HEK293 (cell line): ENCODE measurements at regions of chr5 and their contacts with region 1.

Region 1: GRCh38 chr5:145846081-145846480 is 10.9 kb upstream of the PRELID2 start:
- H3K4me3 ChIP-seq: no peak overlapping the region
- H3K27ac ChIP-seq: no peak overlapping the region
- H3K4me1 ChIP-seq: no peaks in the 10 kb centered on the region
- CTCF ChIP-seq: no peak

Region 2: GRCh38 chr5:146041180-146041789 is 195.2 kb after region 1 on chr5:
- CTCF ChIA-PET with region 1: interaction called, 10 read pairs
- POLR2A ChIA-PET with region 1: no interaction called
- H3K4me3 ChIP-seq: no peak overlapping the region
- H3K27ac ChIP-seq: no peak overlapping the region
- H3K4me1 ChIP-seq: no peaks in the 10 kb centered on the region
- CTCF ChIP-seq: no peak